GM18951 (cell line): ENCODE measurements at regions of chr1 and their contacts with region 1.

Region 1: DNA sequence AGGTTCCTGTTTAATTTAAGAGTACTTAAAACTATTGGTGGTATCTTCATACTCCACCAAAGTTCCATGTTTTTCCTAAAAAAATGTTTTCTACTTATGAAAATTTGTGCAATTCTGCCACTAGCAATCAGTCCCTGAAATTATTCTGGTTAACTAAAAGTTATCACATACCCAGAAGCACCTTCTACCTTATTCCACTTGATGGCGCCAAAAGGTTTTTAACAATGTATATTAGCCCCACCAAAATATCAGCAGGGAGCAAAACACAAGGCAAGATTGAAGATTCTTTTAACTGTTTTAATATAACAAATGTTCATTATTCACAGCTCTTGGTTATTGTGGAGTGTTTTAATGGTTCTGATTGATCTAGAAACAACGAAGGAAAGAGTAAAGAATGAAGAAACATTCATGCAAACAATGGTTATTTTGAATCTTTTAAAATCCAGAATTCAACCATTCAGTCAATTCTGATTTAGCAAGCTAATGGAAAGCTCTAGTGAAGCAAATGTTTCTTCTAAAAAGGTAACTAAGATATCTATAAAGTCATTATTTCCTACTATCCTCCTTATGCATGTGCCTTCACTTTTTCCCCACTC is 67.2 kb downstream of the TTLL7 start:
- POLR2A ChIP-seq: no peak

Region 2: DNA sequence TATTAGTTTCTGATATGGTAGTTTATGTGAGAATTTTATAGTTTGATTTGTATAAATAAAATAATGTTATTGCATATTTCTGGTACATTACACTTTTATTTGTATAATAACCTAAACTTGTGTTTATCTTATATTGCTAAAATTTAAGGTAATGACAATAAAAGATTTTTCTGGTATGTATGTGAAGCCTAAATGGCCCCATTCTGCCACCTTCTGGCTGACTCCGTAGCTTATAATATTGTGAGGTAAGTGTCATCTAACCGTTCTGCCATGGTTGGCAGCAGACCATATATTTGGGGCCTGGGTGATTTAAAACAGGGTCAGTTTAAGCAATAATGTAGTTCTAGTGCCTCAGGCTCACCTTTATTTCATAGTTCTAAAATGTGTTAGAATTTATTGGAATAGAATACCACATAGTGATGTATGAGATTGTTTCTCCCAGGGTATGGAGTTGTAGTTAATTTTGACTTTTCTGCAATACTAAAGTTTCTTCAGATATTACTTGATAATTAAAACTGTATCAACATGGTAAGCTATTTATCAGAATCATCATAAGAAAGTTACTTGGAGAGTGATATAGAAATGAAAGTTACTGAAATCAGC is 191.1 kb after region 1 on chr1:
- in situ Hi-C with region 1: loop called (anchors 25 kb)
- POLR2A ChIP-seq: no peak

Region 3: DNA sequence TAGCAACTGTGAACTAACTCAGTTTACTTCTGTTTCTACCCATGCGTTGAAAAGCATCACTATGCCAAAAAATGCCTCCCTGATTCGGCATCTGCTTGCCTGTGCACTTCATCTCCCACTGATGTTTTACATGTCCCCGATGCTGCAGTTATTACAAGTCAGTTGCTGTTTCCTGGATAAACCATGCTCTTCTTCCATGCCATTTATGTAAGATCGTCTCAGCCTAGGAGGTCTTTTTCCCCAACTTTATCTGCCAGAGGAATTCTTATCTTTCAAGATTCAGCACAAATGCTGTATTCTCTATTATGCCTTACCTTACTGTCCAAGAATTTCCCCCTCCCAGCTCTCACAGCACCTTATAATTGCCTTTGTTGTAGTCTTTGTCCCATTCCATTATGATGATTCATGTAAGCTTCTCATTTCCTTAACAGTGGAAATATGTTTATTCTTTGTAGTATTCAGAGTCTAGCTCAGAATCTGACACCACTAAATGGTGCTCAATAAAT is 242.3 kb after region 1 on chr1:
- in situ Hi-C with region 1: no loop called
- POLR2A ChIP-seq: no peak

Region 4: GRCh38 chr1:84260864-84261518 is 329.2 kb after region 1 on chr1:
- in situ Hi-C with region 1: no loop called
- POLR2A ChIP-seq: no peak

Region 5: GRCh38 chr1:84406346-84406861 is 474.6 kb after region 1 on chr1:
- in situ Hi-C with region 1: loop called (anchors 25 kb)
- POLR2A ChIP-seq: no peak